Motor neuron (in vitro differentiated cells): ENCODE measurements at regions of chr2 and their contacts with region 1.

Region 1: GRCh38 chr2:101188683-101189405 is 37.7 kb upstream of the TBC1D8 start:
- ATAC-seq: peak in 3 of 8 experiments; percentile 66 to 91 (median 73)
- H3K4me3 ChIP-seq: no peak overlapping the region
- H3K27ac ChIP-seq: no peak overlapping the region
- H3K4me1 ChIP-seq: no peaks in the 10 kb centered on the region

Region 2: DNA sequence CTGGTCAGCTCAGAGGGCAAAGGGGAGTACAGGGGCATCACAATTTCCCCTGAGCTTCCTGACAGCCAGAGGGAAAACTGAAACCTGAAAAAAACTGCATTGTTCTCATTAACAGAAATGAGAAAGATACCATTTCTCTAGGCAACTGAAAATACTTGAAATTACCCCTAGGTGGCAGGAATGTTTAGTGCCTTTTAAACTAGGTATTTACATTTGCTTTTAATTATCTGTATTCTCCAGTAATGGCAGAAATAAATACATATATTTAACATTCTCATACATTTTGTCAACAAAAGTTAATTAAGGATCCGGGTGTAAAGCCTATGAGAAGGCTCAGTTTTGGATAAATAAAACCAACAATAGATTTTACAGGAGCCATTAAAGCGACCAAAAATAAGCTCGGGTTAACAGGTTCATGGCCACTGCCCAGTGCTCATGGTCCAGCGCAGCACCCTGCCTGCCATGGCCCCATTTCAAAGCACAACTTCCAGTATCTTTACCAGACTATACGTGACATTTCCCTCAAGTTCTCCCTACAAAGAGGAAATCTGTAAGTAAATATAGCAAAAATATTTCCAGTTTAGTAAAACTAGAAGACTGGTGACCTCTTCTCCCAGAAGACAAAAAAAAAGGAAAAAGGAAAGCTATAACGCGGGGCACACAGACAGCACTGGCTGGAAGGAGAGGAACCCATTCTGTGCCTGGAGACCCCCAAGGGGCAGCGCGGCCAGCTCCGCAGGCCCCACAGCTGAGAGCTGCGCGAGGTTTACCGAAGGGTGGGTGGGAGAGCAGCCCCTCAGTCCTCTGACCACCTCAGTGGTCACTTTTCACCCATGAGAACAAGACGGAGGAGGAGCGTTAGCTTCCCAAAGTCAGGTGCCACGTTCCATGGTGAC is 152.0 kb before region 1 on chr2:
- in situ Hi-C with region 1: loop called in 1 of 9 experiments (anchors 25 kb)
- ATAC-seq: peak in 3 of 8 experiments; percentile 37 to 53 (median 47)
- H3K4me3 ChIP-seq: no peak overlapping the region
- H3K27ac ChIP-seq: no peak overlapping the region
- H3K4me1 ChIP-seq: no peaks in the 10 kb centered on the region